ENCODE measurements at regions of chr6 and their contacts with region 1.

Region 1: GRCh38 chr6:131532580-131533039 is 40.4 kb upstream of the ARG1 start:
- DNase-seq: no peak
- ATAC-seq: no peak

Region 2: GRCh38 chr6:130885392-130886192 is 647.0 kb before region 1 on chr6:
- intact Hi-C with region 1: loop called (anchors 10 kb)
- DNase-seq: no peak
- ATAC-seq: peak; percentile 88

Region 3: GRCh38 chr6:131199568-131200272 is 332.9 kb before region 1 on chr6:
- intact Hi-C with region 1: loop called (anchors 5 kb)
- DNase-seq: no peak
- ATAC-seq: peak; percentile 72